Caco-2 (cell line): ENCODE measurements at regions of chr15 and their contacts with region 1.

Region 1: GRCh38 chr15:53808058-53808706 is 48.7 kb upstream of the WDR72 start:
- DNase-seq: no peak
- H3K4me3 ChIP-seq: no peak overlapping the region
- H3K4me3 Mint-ChIP-seq: no peak overlapping the region
- H3K27ac Mint-ChIP-seq: peak overlapping the region; percentile 70
- H3K4me1 ChIP-seq: peaks cover 57% of the 10 kb centered on the region
- H3K4me1 Mint-ChIP-seq: peaks cover 21% of the 10 kb centered on the region
- H3K27me3 ChIP-seq: no peaks in the 10 kb centered on the region
- H3K27me3 Mint-ChIP-seq: no peaks in the 10 kb centered on the region
- CTCF ChIP-seq: peak; percentile 52 to 59

Region 2: GRCh38 chr15:53841652-53842051 is 33.5 kb after region 1 on chr15:
- CTCF ChIA-PET with region 1: interaction called, 18 read pairs
- POLR2A ChIA-PET with region 1: interaction called, 10 read pairs
- intact Hi-C with region 1: loop called (anchors 1 kb)
- DNase-seq: no peak
- H3K4me3 ChIP-seq: no peak overlapping the region
- H3K4me3 Mint-ChIP-seq: peak overlapping the region; percentile 43
- H3K27ac Mint-ChIP-seq: peak overlapping the region; percentile 86
- H3K4me1 ChIP-seq: peaks cover 81% of the 10 kb centered on the region
- H3K4me1 Mint-ChIP-seq: peaks cover 48% of the 10 kb centered on the region
- H3K27me3 ChIP-seq: no peaks in the 10 kb centered on the region
- H3K27me3 Mint-ChIP-seq: no peaks in the 10 kb centered on the region
- CTCF ChIP-seq: no peak

Region 3: GRCh38 chr15:53962332-53963241 is 154.4 kb after region 1 on chr15:
- CTCF ChIA-PET with region 1: interaction called, 10 read pairs
- POLR2A ChIA-PET with region 1: no interaction called
- intact Hi-C with region 1: loop called (anchors 1 kb)
- DNase-seq: peak; percentile 45 to 47
- H3K4me3 ChIP-seq: no peak overlapping the region
- H3K4me3 Mint-ChIP-seq: no peak overlapping the region
- H3K27ac Mint-ChIP-seq: no peak overlapping the region
- H3K4me1 ChIP-seq: 0 out of 2 replicates have a peak, but pooled peaks cover 6% of the 10 kb centered on the region
- H3K4me1 Mint-ChIP-seq: no peaks in the 10 kb centered on the region
- H3K27me3 ChIP-seq: no peaks in the 10 kb centered on the region
- H3K27me3 Mint-ChIP-seq: no peaks in the 10 kb centered on the region
- CTCF ChIP-seq: peak; percentile 63 to 64

Region 4: GRCh38 chr15:54159012-54159411 is 350.8 kb after region 1 on chr15:
- CTCF ChIA-PET with region 1: no interaction called
- POLR2A ChIA-PET with region 1: no interaction called
- intact Hi-C with region 1: loop called (anchors 10 kb)
- DNase-seq: no peak
- H3K4me3 ChIP-seq: no peak overlapping the region
- H3K4me3 Mint-ChIP-seq: no peak overlapping the region
- H3K27ac Mint-ChIP-seq: no peak overlapping the region
- H3K4me1 ChIP-seq: no peaks in the 10 kb centered on the region
- H3K4me1 Mint-ChIP-seq: no peaks in the 10 kb centered on the region
- H3K27me3 ChIP-seq: no peaks in the 10 kb centered on the region
- H3K27me3 Mint-ChIP-seq: no peaks in the 10 kb centered on the region
- CTCF ChIP-seq: no peak